ENCODE measurements at regions of chr3 and their contacts with region 1.

Region 1: DNA sequence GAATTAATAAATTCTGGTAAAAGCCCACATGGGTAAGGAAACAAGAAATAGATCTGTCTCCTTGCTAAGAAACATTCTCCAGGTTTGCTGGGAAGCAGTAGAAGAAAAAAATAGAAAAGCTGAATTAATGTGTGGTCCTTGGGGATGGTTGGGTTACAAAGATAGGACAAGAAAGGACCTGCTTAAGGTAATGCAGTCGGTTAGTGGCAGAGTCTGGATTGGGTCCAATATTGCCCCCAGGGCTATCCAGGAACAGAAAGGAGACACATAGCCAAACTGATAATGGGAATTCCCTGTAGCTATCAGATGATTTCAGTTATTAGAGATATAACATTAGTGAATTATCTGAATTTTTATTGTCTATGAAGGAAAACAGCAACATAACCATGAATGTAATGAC is 584.3 kb downstream of the ROBO1 start:
- DNase-seq: no peak
- ATAC-seq: no peak
- H3K4me3 ChIP-seq: no peak overlapping the region
- H3K27ac ChIP-seq: no peak overlapping the region
- H3K4me1 ChIP-seq: no peaks in the 10 kb centered on the region
- H3K27me3 ChIP-seq: peaks cover 0 to 1% of the 10 kb centered on the region in 2 experiments; a peak in 1 of 5 replicates
- CTCF ChIP-seq: no peak
- EP300 ChIP-seq: no peak
- POLR2A ChIP-seq: no peak
- RAD21 ChIP-seq: no peak

Region 2: DNA sequence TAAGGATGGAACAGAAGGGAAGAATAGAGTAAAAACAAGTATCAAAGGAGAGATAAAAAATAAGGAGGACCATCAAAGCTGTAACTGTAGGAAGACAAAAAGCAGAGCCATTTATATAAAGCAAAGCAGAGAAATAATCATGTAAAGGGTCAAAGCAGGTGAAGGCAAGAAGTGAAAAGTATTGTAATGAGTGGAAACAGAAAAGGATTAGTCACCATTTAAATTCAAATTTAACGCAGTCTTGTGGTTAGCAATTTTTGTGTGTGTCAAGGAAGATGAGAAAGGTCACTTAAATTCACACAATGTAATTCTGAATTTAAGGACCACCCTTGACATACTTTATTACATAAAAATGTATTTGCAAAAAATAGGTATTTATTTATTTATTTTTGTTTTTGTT is 16.5 kb after region 1 on chr3:
- CTCF ChIA-PET with region 1: no interaction called
- POLR2A ChIA-PET with region 1: no interaction called
- in situ Hi-C with region 1: no loop called
- intact Hi-C with region 1: loop called (anchors 1 kb)
- DNase-seq: no peak
- ATAC-seq: no peak
- H3K4me3 ChIP-seq: no peak overlapping the region
- H3K27ac ChIP-seq: no peak overlapping the region
- H3K4me1 ChIP-seq: no peaks in the 10 kb centered on the region
- H3K27me3 ChIP-seq: no peaks in the 10 kb centered on the region
- CTCF ChIP-seq: no peak
- EP300 ChIP-seq: no peak
- POLR2A ChIP-seq: no peak
- RAD21 ChIP-seq: no peak

Measured in HepG2 (cell line).